ENCODE measurements at regions of chr1 and their contacts with region 1.

Region 1: DNA sequence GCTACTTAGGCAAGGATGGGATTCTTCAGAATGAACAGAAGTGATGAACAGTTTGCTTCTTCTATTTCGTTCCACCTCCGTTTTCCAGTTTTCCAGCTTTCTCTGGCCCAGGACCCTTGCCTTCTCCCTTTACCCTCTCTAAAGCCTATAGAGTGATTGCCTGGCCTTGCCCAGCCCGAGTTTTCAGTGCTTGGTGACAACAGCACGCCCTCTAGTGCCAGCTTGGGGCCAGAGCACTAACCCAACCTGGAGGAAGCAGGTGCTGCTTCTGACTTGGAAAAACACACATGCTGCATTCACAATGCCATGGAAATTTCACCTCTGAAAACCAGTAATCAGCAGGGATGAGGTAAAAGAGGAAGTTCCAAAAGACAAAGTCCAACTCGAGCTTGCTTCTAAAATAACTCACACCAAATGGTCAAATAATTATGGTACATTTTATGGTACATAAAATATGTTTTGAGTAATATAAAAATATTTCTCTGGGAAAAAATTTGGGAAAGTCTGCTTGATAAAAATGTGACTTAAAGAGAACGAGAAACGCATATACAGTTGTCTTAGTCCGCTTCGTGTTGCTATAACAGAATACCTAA is 26.1 kb downstream of the UBE2T start:
- DNase-seq: peak; percentile 76
- H3K4me3 ChIP-seq: no peak overlapping the region
- H3K27ac ChIP-seq: no peak overlapping the region
- H3K4me1 ChIP-seq: peaks cover 7% of the 10 kb centered on the region
- CTCF ChIP-seq: peak; percentile 99

Region 2: GRCh38 chr1:202135221-202135721 is 180.4 kb before region 1 on chr1:
- CTCF ChIA-PET with region 1: no interaction called
- POLR2A ChIA-PET with region 1: no interaction called
- intact Hi-C with region 1: no loop called
- DNase-seq: peak; percentile 73
- H3K4me3 ChIP-seq: no peak overlapping the region
- H3K27ac ChIP-seq: no peak overlapping the region
- H3K4me1 ChIP-seq: no peaks in the 10 kb centered on the region
- CTCF ChIP-seq: peak; percentile 88

Region 3: GRCh38 chr1:202192770-202193613 is 122.7 kb before region 1 on chr1:
- CTCF ChIA-PET with region 1: no interaction called
- POLR2A ChIA-PET with region 1: no interaction called
- intact Hi-C with region 1: loop called (anchors 1 kb)
- DNase-seq: peak; percentile 65
- H3K4me3 ChIP-seq: no peak overlapping the region
- H3K27ac ChIP-seq: no peak overlapping the region
- H3K4me1 ChIP-seq: peaks cover 11% of the 10 kb centered on the region
- CTCF ChIP-seq: peak; percentile 89

Region 4: GRCh38 chr1:202235856-202236837 is 79.5 kb before region 1 on chr1:
- CTCF ChIA-PET with region 1: no interaction called
- POLR2A ChIA-PET with region 1: no interaction called
- intact Hi-C with region 1: loop called (anchors 2 kb)
- DNase-seq: peak; percentile 64
- H3K4me3 ChIP-seq: no peak overlapping the region
- H3K27ac ChIP-seq: no peak overlapping the region
- H3K4me1 ChIP-seq: no peaks in the 10 kb centered on the region
- CTCF ChIP-seq: peak; percentile 83

Region 5: GRCh38 chr1:202274611-202275010 is 41.1 kb before region 1 on chr1:
- CTCF ChIA-PET with region 1: no interaction called
- POLR2A ChIA-PET with region 1: no interaction called
- intact Hi-C with region 1: loop called (anchors 1 kb)
- DNase-seq: peak; percentile 47
- H3K4me3 ChIP-seq: no peak overlapping the region
- H3K27ac ChIP-seq: no peak overlapping the region
- H3K4me1 ChIP-seq: no peaks in the 10 kb centered on the region
- CTCF ChIP-seq: peak; percentile 74

Region 6: DNA sequence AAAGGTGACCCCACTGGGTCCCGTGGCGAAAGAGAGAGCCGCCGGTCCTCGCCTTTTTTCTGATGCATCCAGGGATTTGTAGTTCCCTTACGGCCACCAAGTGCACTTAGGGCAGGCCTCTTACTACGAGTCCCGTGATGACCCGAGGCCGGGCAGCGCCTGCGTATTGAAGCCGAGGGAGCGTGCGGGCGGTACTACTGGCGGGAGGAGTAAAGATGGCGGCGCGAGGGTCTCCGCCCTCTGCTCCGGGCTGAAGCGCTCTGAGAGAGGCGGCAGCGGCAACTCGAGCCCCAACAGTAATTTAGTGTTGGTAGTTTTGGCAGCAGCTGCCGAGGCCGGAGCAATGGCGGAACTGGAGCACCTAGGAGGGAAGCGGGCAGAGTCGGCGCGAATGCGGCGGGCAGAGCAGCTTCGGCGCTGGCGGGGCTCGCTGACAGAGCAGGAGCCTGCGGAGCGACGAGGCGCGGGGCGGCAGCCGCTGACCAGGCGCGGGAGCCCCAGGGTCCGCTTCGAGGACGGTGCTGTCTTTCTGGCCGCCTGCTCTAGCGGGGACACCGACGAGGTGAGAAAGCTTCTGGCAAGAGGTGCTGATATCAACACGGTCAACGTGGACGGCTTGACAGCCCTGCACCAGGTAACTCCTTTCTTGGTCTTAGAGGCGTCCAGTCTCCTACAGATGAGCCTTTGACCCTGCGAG is 33.0 kb after region 1 on chr1 and contains the start of gene PPP1R12B:
- CTCF ChIA-PET with region 1: no interaction called
- POLR2A ChIA-PET with region 1: no interaction called
- intact Hi-C with region 1: no loop called
- DNase-seq: peak; percentile 98
- H3K4me3 ChIP-seq: peak within 1 kb of the TSS; percentile 86
- H3K27ac ChIP-seq: peak within 1 kb of the TSS; percentile 22
- H3K4me1 ChIP-seq: peaks cover 19% of the 10 kb centered on the region
- CTCF ChIP-seq: no peak
- total RNA-seq, gene PPP1R12B: 19.1 and 37.1 TPM in 2 replicates